ENCODE measurements at regions of chr15 and their contacts with region 1.

Region 1: DNA sequence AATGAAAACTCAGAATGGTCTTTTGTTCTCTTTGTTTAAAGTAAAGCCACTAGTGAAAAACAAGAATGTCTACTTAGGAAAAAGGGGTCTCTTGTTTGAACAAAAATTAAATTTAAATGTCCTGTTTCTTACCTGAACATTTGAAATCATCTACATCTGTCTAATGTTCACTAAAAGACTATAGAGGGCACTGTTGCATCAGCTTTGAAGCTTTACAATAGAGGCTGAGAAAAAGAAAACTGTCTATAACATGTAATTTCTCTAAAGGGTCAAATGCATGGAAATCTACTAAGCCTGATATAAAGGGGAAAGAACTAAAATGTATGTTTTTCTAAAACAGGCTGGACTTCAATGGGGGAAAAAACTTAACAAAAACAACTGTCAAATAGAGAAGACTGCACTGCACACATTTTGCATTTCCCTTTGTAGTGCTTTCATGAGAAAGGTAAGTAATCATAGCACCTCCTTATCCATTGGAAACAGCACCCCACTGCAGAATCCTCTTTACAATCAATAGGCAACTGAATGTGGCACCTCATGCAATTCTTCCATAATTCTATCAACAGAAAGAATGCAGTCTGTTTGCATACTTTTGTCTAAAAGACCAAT is 26.3 kb downstream of the DPH6 start:
- DNase-seq: no peak
- H3K4me3 Mint-ChIP-seq: no peak overlapping the region
- H3K27ac Mint-ChIP-seq: no peak overlapping the region
- H3K4me1 Mint-ChIP-seq: no peaks in the 10 kb centered on the region
- H3K27me3 Mint-ChIP-seq: no peaks in the 10 kb centered on the region

Region 2: GRCh38 chr15:35751413-35752133 is 231.9 kb after region 1 on chr15:
- intact Hi-C with region 1: loop called (anchors 1 kb)
- DNase-seq: peak; percentile 6
- H3K4me3 Mint-ChIP-seq: no peak overlapping the region
- H3K27ac Mint-ChIP-seq: no peak overlapping the region
- H3K4me1 Mint-ChIP-seq: no peaks in the 10 kb centered on the region
- H3K27me3 Mint-ChIP-seq: peaks cover 2% of the 10 kb centered on the region

Region 3: GRCh38 chr15:36501063-36501678 is 981.5 kb after region 1 on chr15:
- intact Hi-C with region 1: loop called (anchors 10 kb)
- DNase-seq: no peak
- H3K4me3 Mint-ChIP-seq: no peak overlapping the region
- H3K27ac Mint-ChIP-seq: no peak overlapping the region
- H3K4me1 Mint-ChIP-seq: no peaks in the 10 kb centered on the region
- H3K27me3 Mint-ChIP-seq: peaks cover 9% of the 10 kb centered on the region

Region 4: GRCh38 chr15:36877796-36878683 is 1358.4 kb after region 1 on chr15:
- intact Hi-C with region 1: loop called (anchors 10 kb)
- DNase-seq: no peak
- H3K4me3 Mint-ChIP-seq: no peak overlapping the region
- H3K27ac Mint-ChIP-seq: no peak overlapping the region
- H3K4me1 Mint-ChIP-seq: no peaks in the 10 kb centered on the region
- H3K27me3 Mint-ChIP-seq: peaks cover 77% of the 10 kb centered on the region

Region 5: DNA sequence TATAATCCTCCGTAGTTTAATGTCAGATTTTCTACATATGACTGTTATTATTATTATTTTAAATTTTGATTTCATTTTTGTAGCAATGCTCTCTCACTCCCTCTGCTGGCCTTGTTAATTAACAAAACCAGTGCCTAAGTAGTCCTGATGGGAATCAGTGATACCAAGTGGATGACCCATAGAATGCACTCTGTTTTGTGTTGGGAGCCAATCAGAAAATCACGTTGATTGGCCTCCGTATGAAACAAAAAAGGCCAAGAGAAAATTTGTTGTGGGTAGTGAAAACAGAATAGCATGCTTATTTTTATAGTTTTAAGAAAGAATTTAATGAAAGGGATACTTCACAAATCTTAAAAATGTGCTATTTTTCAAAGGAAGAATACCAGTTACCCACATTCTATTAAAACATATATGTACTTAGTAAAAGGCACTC is 1615.1 kb after region 1 on chr15:
- intact Hi-C with region 1: loop called (anchors 10 kb)
- DNase-seq: no peak
- H3K4me3 Mint-ChIP-seq: no peak overlapping the region
- H3K27ac Mint-ChIP-seq: no peak overlapping the region
- H3K4me1 Mint-ChIP-seq: no peaks in the 10 kb centered on the region
- H3K27me3 Mint-ChIP-seq: peaks cover 6% of the 10 kb centered on the region

Measured in activated T-helper 1 cell treated with anti-CD3 and anti-CD28 coated beads, Interleukin-12 subunit alpha, Interleukin-12 subunit beta, Interleukin-2, Interleukin-4 antibody, amounts not matched to agents 30 ng/mL and 10 ng/mL and 1 ng/mL, durations not matched to agents 14 hours and 24 hours and 36 hours (primary cell).